Activated CD4-positive, alpha-beta memory T cell treated with anti-CD3 and anti-CD28 coated beads, Interleukin-2, amount 10 ng/mL, durations not matched to agents 7 days and 5 days (primary cell): ENCODE measurements at regions of chr1 and their contacts with region 1.

Region 1: DNA sequence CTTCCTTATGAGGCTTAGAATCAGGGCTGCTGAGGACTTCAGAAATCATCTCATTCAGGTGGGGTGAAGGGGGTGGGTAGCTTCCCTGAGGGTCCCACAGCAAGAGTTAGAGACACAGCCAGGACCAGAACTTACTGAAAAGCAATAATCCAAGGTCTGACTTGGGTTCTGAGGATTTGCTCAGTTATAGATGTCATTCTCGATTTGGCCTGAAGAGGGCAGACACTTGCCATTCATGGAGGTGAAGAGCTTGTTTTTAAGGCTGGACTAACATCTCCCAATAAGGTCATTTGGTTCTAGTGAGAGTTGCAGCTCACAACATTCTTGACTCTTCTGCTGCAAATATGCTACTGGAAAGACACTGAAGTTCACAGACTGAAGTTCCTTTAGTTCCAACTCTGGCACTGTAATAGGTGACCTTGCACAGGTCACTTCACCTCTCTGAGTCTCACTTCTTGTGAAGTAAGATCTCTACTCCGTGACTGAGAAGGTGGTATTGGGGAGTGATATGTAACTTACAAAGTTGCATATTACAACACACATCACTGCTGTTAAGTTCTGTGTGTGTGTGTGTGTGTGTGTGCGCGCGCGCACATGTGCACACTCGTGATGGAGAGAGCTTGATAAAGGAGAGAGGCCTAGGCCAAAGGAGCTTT is 69.8 kb upstream of the DIRAS3 start:
- DNase-seq: peak; percentile 24
- H3K4me3 Mint-ChIP-seq: no peak overlapping the region
- H3K27ac Mint-ChIP-seq: no peak overlapping the region
- H3K4me1 Mint-ChIP-seq: peaks cover 5% of the 10 kb centered on the region
- H3K27me3 Mint-ChIP-seq: no peaks in the 10 kb centered on the region

Region 2: DNA sequence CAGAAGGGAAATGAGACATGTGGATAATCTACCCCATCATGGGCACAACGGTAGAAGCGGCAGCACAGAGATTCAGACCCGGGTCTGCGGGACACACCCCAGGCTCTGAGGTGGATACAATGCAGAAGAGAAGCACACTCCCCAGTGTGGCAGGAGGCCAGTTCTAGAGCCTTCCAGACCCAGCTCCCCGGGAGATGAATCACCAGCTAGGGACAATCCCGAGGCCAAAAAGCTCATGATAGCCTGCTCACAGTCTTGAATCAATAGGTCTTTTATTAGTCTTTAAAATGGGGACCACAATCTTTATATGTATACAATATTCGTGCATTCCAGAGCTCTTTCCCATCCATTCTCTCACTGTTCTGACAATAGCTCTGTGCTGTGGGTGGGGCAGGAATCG is 12.5 kb before region 1 on chr1:
- CTCF ChIA-PET with region 1: interaction called, 10 read pairs
- POLR2A ChIA-PET with region 1: no interaction called
- DNase-seq: no peak
- H3K4me3 Mint-ChIP-seq: no peak overlapping the region
- H3K27ac Mint-ChIP-seq: no peak overlapping the region
- H3K4me1 Mint-ChIP-seq: no peaks in the 10 kb centered on the region
- H3K27me3 Mint-ChIP-seq: peaks cover 8% of the 10 kb centered on the region

Region 3: DNA sequence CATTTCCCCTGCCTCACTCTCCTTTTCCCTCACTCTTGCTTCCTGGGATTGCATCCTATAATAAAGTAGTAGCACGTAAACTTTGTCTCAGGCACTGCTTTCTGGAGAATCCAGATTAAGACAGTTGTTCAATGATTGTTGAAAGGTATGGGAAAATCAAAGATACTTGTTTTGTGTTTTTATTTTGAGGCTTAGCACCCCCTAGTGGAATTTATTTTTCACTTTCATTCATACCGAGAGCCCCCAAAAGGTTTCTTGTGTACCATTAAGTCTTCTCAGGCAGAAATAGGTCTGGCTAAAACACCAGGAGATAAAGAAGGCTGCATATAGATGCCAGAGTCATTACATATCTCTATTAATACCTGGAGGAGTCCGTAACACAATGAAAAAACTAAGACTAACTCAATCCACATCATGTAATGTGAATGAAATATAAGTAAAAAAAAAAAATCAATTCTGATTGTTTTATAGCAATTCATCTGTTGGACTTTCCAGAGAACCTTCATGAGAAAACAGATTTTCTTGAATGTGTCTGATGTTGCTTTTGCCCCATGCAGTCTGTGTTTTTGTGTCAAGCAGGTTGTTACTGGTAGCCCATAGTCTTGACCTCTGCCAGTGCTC is 226.0 kb after region 1 on chr1:
- CTCF ChIA-PET with region 1: interaction called, 16 read pairs
- POLR2A ChIA-PET with region 1: no interaction called
- DNase-seq: no peak
- H3K4me3 Mint-ChIP-seq: no peak overlapping the region
- H3K27ac Mint-ChIP-seq: no peak overlapping the region
- H3K4me1 Mint-ChIP-seq: no peaks in the 10 kb centered on the region
- H3K27me3 Mint-ChIP-seq: no peaks in the 10 kb centered on the region

Region 4: DNA sequence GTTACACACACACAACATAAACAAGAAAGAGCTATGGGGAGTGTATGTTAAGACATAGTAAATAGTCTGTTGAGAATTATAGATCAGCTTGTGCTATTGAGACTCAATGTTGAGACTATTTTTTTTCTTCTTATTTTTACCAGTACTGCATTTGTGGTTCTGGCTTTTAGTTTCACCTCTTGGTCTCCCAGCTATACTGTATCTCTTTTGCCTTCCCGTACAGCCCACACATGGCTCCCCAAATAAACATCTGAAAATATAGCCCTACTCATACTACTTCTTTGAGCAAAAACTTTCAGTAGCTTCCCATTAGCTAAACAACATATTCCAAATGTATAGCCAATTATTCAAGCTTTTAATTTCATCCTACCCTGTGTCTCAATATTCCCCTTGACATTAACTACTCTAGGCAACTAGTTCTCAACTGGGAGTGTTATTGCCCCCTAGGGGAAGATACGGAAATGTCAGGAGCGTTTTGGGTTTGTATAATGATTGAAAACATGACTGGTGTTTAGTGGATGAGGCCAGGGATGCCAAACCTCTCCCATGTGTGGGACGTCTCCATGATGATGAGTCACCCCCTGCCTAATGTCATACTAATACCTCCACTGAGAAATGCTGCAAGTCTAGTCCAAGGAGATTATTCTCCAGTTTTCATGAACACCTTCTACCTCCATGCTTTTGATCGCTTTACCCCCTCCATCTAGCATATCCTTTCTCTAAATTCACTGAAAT is 322.7 kb after region 1 on chr1:
- CTCF ChIA-PET with region 1: interaction called, 12 read pairs
- POLR2A ChIA-PET with region 1: no interaction called
- DNase-seq: no peak
- H3K4me3 Mint-ChIP-seq: no peak overlapping the region
- H3K27ac Mint-ChIP-seq: no peak overlapping the region
- H3K4me1 Mint-ChIP-seq: no peaks in the 10 kb centered on the region
- H3K27me3 Mint-ChIP-seq: peaks cover 2% of the 10 kb centered on the region